Psoas muscle (tissue), 8 donors: ENCODE measurements at regions of chr2 and their contacts with region 1.

Region 1: GRCh38 chr2:172588931-172589330 is 33.0 kb downstream of the PDK1 start:
- DNase-seq: no peak
- ATAC-seq: peak in 2 of 4 donors; percentile 42 to 79
- H3K4me3 ChIP-seq: no peak overlapping the region
- H3K27ac ChIP-seq: no peak overlapping the region
- H3K4me1 ChIP-seq: no peaks in the 10 kb centered on the region
- H3K27me3 ChIP-seq: no peaks in the 10 kb centered on the region
- CTCF ChIP-seq: no peak

Region 2: DNA sequence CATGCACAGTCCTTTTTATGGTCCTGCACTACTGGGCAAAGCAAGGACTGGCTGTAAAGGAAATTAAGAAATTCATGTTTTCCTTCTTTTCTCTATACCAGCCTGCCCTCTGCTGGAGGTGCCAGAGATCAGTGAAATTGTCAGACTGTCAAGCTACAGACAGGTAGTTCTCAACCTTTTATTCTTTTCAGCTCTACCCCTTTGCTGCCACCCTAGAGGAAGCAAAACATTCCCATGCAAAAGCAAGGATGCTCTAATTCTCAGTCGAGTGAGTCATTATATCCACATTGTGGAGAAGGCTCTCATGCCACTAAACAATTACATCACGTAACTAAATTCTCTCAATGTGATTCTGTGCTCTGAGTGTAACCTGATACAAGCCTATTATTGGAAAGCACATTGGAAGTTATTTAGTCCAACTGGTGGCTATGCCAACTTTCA is 121.7 kb after region 1 on chr2:
- intact Hi-C with region 1: loop called (anchors 5 to 10 kb)
- DNase-seq: no peak
- ATAC-seq: peak in 1 of 4 donors; percentile 39
- H3K4me3 ChIP-seq: no peak overlapping the region
- H3K27ac ChIP-seq: no peak overlapping the region
- H3K4me1 ChIP-seq: no peaks in the 10 kb centered on the region
- H3K27me3 ChIP-seq: no peaks in the 10 kb centered on the region
- CTCF ChIP-seq: peak; percentile 49